Cardiac septum (tissue), 1 donor: ENCODE measurements at regions of chr9 and their contacts with region 1.

Region 1: DNA sequence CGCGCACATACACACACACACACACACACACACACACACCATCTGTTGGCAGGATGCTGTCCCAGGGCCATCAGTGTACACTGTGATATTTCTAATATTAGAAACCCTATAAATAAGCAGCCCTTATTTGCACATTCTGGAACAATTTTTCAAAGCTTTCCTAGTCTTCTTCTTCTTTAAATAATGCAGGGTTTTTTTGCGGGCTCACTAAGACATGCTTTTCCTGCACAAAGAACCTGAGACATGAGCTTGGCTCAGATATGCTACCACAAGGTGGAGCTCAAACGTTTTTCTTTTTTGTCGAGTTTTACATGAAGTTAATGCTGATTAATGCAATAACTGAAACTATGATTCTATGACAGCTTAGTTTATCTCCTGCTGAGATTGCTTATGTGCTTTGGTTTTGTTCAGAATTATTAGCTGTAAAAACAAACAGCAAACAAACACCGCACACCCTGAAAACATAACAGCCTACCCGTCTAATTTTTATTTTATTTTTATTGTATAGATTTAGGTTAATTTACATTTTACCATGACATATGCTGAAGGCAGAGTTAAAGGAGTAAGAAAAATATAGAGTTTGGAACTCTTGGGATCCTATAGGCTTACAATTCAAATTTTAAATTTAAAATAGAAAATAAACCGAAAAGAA is 95.8 kb downstream of the ALDH1A1 start:
- DNase-seq: no peak

Region 2: GRCh38 chr9:73009649-73010288 is 152.7 kb after region 1 on chr9:
- intact Hi-C with region 1: no loop called
- DNase-seq: no peak

Region 3: DNA sequence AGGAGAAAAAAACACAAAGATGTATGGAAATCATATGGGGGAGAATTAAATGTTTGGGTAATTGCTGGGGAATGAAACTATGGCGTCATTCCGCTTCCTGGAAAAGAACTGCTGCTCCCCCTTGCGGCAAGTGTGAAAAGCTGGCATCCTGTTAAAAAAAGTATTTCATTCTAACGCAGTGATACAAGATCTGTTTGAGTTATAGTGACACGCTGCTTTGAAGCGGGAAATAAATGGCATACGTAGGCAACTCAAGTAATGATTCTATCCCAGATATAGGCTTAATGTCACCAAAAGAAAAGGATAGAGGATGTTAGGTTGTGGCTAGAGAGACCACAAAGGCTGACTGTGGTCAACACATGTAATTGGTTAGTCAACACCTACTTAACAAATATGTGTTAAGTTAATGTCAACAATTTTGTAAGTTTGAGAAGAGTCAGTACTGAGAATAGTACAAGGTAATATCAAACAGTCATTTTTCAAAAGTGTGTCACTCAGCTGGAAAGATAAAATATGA is 166.0 kb after region 1 on chr9:
- intact Hi-C with region 1: loop called (anchors 2 kb)
- DNase-seq: no peak

Region 4: DNA sequence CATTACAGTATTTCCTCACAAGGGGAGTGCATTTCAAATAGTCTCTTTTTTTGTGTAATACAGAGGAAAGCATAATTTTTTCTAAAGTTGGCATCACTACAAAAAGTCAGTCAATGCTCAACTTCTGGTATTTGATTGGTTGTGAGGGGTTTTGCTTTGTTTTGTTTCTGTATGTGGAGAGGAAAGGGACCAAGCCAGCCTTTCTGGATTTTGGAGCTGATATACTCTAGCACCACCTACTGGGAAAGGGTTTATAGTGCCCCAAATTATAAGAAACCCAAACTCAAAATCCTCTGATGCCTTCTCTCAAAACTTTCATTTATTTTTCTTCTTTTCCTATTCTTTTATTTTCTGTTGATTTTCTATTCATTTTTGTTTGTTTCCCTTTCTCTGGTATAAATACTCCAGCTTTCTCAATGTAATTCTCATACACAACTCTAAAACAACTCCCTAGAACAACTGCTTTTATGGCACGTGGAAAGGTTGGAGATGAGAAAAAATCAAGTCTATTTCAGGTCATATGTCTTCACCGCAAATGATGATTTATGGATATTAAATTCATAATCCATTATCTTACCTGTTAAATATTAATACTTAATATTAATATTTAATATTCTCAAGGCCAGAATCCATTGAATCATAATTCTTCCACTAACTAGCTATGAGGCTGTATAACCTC is 225.0 kb after region 1 on chr9:
- intact Hi-C with region 1: loop called (anchors 2 kb)
- DNase-seq: no peak

Region 5: DNA sequence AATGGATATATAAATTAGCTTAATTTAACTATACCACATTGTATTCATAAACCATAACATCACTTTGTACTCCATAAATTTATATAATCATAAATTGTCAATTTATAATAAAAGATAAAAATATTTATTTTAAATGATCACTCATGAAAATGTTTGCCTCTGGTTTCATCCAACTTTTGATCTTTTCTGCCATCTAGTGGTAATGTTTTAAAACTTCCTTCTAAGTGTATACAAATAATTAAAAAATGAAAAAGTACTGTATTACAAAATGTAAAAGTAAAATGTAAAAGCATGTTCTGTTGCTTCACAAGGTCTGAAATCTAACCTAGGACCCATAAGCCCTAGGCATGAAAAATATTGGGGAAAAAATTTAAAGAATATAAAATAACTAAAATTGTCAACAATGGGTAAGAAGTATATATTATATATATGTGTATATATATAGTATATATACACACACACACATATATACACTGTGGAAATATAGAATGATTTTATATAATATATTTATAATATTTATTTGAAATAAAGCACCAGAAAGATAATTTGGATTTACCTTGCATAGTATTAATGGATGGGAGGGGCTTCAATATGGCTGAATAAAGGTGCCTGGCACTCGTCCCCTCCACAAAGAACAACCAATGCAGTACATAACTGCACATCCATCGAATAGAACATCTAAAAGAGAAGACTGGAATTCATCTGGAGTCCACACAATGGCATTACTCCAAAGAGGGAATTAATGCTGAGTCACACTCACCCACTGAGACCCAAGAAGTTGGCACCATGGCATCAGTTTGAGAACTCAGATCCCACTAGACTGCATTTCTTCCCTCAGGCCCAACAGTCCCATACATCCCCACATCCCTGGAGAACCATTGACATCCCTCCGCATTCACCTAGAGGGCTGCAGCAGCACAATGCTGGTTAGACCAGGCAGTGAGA is 327.1 kb after region 1 on chr9:
- intact Hi-C with region 1: loop called (anchors 10 kb)
- DNase-seq: no peak

Region 6: DNA sequence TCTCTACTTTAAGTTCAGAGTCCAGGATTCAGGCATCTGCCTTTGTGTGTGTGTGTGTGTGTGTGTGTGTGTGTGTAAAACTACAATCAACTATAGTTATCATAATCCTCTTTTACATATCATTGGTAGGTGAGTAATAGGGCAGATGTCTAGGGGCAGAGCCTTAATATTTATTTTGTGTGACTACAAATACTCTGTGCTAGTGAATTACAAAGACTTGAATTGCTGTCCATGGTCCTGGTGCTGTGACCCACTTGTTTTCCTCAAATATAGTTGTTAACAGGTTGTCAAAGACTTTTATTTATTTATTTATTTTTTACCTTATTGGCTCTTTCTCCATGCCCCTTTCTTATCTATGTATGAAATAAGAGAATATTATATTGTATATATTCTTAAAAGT is 491.4 kb after region 1 on chr9:
- intact Hi-C with region 1: no loop called
- DNase-seq: no peak